Activated B cell treated with CpG ODN at 0.5 μM for 24 hours (primary cell): ENCODE measurements at regions of chr1 and their contacts with region 1.

Region 1: DNA sequence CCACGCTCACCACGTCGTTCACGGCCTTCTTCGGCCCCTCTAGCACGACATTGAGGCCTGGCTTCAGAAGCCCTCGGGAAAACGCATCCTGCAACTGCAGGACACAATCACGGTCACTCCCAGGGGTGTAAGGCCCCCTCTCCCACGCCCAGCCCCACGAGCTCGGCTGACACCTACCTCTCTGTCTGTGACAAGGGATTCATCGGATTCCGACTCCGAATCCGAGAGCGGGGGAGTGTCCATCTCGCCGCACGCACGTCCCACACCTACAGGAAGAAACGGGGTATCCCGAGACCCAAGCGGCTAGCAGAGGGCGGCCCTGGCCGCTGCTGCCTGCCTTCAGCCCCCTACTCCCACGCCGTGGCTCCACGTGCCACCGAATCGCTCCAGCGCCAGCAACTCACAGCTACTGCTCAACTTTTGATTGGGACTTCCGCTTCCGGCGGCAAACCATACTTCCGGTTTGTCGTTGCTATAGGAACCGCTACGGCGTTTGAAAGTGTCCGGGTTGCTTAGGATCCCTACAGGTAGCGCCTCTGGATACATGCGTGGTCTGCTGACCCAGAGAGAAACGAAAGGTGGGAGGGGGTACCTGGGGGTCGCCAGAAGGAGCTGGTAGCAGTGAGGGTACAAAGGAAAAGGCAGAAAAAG is at the starts of genes CFAP57 and EBNA1BP2:
- DNase-seq: peak; percentile 84
- ATAC-seq: peak; percentile 82
- H3K4me3 Mint-ChIP-seq: peak within 1 kb of the TSS; percentile 99
- H3K27ac Mint-ChIP-seq: peak within 1 kb of the TSS; percentile 95
- H3K4me1 Mint-ChIP-seq: peaks cover 32% of the 10 kb centered on the region
- H3K27me3 Mint-ChIP-seq: peaks cover 20% of the 10 kb centered on the region
- CTCF ChIP-seq: no peak
- total RNA-seq, gene CFAP57: 0.93 TPM in 1 of 2 replicates, not detected in the other
- total RNA-seq, gene EBNA1BP2: 59.9 and 61.8 TPM in 2 replicates

Region 2: GRCh38 chr1:42816585-42817434 is 355.2 kb before region 1 on chr1 and contains the starts of genes ERMAP and SVBP:
- CTCF ChIA-PET with region 1: no interaction called
- POLR2A ChIA-PET with region 1: interaction called, 3 read pairs
- intact Hi-C with region 1: loop called (anchors 1 kb)
- DNase-seq: peak; percentile 97
- ATAC-seq: peak; percentile 88
- H3K4me3 Mint-ChIP-seq: peak within 1 kb of the TSS; percentile 86
- H3K27ac Mint-ChIP-seq: peak within 1 kb of the TSS; percentile 86
- H3K4me1 Mint-ChIP-seq: peaks cover 20% of the 10 kb centered on the region
- H3K27me3 Mint-ChIP-seq: no peaks in the 10 kb centered on the region
- CTCF ChIP-seq: no peak
- total RNA-seq, gene ERMAP: 7.1 and 10.7 TPM in 2 replicates
- total RNA-seq, gene SVBP: 21.5 and 22.4 TPM in 2 replicates

Region 3: GRCh38 chr1:43188106-43188505 is 16.1 kb after region 1 on chr1:
- CTCF ChIA-PET with region 1: no interaction called
- POLR2A ChIA-PET with region 1: no interaction called
- intact Hi-C with region 1: no loop called
- DNase-seq: no peak
- ATAC-seq: no peak
- H3K4me3 Mint-ChIP-seq: no peak overlapping the region
- H3K27ac Mint-ChIP-seq: no peak overlapping the region
- H3K4me1 Mint-ChIP-seq: no peaks in the 10 kb centered on the region
- H3K27me3 Mint-ChIP-seq: peaks cover 3% of the 10 kb centered on the region
- CTCF ChIP-seq: no peak

Region 4: DNA sequence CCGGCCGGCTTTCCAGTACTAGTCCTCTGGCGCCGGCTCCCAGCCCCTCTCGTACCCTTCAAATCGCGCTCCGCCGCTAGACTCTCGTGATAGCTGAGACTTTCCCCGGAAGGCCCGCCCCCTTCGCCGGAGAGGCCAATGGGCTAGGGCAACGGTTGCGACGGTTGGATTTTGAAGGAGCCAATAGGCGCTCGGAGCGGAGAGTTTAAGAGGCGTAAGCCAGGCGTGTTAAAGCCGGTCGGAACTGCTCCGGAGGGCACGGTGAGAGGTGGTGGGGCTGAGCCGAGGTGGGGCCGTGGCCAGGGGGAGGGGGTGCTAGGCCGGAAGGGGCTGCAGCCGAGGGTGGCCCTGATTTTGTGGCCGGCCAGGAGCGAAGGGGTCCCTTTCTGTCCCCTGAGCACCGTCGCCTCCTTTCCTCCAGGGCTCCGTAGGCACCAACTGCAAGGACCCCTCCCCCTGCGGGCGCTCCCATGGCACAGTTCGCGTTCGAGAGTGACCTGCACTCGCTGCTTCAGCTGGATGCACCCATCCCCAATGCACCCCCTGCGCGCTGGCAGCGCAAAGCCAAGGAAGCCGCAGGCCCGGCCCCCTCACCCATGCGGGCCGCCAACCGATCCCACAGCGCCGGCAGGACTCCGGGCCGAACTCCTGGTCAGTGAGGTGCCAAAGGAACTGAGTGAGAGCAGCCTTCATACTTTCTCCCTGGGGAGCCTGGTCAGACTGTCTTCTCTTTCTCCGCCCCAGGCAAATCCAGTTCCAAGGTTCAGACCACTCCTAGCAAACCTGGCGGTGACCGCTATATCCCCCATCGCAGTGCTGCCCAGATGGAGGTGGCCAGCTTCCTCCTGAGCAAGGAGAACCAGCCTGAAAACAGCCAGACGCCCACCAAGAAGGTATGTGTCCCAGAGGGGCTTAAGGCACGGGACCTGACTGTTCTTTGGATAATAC is 187.0 kb after region 1 on chr1 and contains the start of gene CDC20:
- CTCF ChIA-PET with region 1: no interaction called
- POLR2A ChIA-PET with region 1: interaction called, 7 read pairs
- intact Hi-C with region 1: loop called (anchors 2 kb)
- DNase-seq: peak; percentile 96
- ATAC-seq: peak; percentile 99
- H3K4me3 Mint-ChIP-seq: peak within 1 kb of the TSS; percentile 91
- H3K27ac Mint-ChIP-seq: peak within 1 kb of the TSS; percentile 91
- H3K4me1 Mint-ChIP-seq: peaks cover 16% of the 10 kb centered on the region
- H3K27me3 Mint-ChIP-seq: no peaks in the 10 kb centered on the region
- CTCF ChIP-seq: no peak
- total RNA-seq, gene CDC20: 3.2 and 4.2 TPM in 2 replicates

Region 5: GRCh38 chr1:43650310-43651085 is 478.5 kb after region 1 on chr1:
- CTCF ChIA-PET with region 1: no interaction called
- POLR2A ChIA-PET with region 1: interaction called, 5 read pairs
- intact Hi-C with region 1: loop called (anchors 2 kb)
- DNase-seq: peak; percentile 82
- ATAC-seq: peak; percentile 75
- H3K4me3 Mint-ChIP-seq: peak overlapping the region; percentile 98
- H3K27ac Mint-ChIP-seq: peak overlapping the region; percentile 97
- H3K4me1 Mint-ChIP-seq: peaks cover 46% of the 10 kb centered on the region
- H3K27me3 Mint-ChIP-seq: peaks cover 2% of the 10 kb centered on the region
- CTCF ChIP-seq: no peak